Activated CD4-positive, alpha-beta memory T cell treated with anti-CD3 and anti-CD28 coated beads, Interleukin-2, amount 10 ng/mL, durations not matched to agents 7 days and 5 days (primary cell): ENCODE measurements at regions of chr11 and their contacts with region 1.

Region 1: GRCh38 chr11:4072668-4073285 is 21.8 kb upstream of the RRM1 start:
- DNase-seq: peak; percentile 51
- H3K4me3 Mint-ChIP-seq: no peak overlapping the region
- H3K27ac Mint-ChIP-seq: peak overlapping the region; percentile 5
- H3K4me1 Mint-ChIP-seq: peaks cover 33% of the 10 kb centered on the region
- H3K27me3 Mint-ChIP-seq: no peaks in the 10 kb centered on the region

Region 2: GRCh38 chr11:3824714-3825472 is 247.9 kb before region 1 on chr11:
- CTCF ChIA-PET with region 1: interaction called, 19 read pairs
- POLR2A ChIA-PET with region 1: interaction called, 6 read pairs
- DNase-seq: peak; percentile 82
- H3K4me3 Mint-ChIP-seq: no peak overlapping the region
- H3K27ac Mint-ChIP-seq: peak overlapping the region; percentile 56
- H3K4me1 Mint-ChIP-seq: peaks cover 30% of the 10 kb centered on the region
- H3K27me3 Mint-ChIP-seq: no peaks in the 10 kb centered on the region

Region 3: DNA sequence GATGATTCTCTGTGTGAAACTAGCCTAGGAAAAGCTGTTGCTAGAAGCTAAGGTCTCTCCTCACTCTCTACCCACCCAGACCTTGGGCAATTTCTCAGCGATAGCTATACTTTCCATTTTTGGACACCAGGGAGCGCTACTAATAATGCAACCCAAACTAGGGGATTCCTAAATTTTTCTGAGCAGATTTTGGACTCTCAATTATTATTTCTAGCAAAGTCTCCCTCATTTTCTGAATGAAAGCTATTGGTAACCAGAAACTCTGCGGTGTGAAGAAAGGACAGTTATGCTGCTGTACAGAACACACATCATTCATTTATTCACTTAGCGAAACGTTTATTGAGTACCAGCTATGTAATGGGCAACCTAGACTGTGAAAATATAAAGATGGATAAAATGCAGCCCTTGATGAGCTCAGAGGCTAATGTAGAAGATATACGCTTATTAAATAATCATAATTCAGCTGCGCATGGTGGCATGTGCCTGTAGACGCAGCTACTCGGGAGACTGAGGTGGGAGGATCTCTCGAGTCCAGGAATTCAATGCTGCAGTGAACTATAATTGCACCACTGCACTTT is 223.4 kb before region 1 on chr11:
- CTCF ChIA-PET with region 1: interaction called, 554 read pairs
- POLR2A ChIA-PET with region 1: interaction called, 108 read pairs
- DNase-seq: peak; percentile 48
- H3K4me3 Mint-ChIP-seq: no peak overlapping the region
- H3K27ac Mint-ChIP-seq: no peak overlapping the region
- H3K4me1 Mint-ChIP-seq: peaks cover 33% of the 10 kb centered on the region
- H3K27me3 Mint-ChIP-seq: peaks cover 3% of the 10 kb centered on the region

Region 4: DNA sequence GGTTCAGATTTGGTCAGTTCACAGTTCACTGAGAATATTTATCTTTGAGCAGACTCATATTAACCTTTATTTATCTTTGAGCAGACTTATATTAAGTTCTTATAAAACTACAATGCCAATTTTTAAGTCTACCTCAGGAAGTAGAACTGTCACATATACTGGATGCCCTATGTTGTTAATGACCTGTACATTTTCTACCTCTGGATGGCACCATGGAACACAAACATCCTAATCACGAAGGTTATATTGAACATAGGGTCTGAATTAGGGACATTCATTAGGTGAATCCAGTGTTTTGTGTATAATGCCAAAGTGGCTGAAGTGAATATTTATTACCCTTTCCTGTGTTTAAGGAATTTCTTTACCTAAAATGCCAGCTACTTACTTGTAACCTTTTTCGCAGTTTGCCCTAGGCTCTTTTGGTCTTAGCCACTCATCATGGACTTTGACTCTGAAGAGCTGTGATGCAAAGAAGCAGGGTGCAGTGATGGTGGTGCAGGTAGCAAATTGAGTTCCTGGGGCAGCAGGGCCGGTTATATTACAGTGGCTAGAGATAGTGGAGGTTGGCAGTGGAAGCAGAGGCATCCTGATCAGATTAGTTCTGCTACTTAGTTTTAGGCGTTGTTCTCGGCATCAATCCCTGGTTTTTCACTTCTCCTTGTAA is 145.5 kb before region 1 on chr11:
- CTCF ChIA-PET with region 1: interaction called, 15 read pairs
- POLR2A ChIA-PET with region 1: no interaction called
- DNase-seq: no peak
- H3K4me3 Mint-ChIP-seq: no peak overlapping the region
- H3K27ac Mint-ChIP-seq: no peak overlapping the region
- H3K4me1 Mint-ChIP-seq: peaks cover 9% of the 10 kb centered on the region
- H3K27me3 Mint-ChIP-seq: no peaks in the 10 kb centered on the region

Region 5: DNA sequence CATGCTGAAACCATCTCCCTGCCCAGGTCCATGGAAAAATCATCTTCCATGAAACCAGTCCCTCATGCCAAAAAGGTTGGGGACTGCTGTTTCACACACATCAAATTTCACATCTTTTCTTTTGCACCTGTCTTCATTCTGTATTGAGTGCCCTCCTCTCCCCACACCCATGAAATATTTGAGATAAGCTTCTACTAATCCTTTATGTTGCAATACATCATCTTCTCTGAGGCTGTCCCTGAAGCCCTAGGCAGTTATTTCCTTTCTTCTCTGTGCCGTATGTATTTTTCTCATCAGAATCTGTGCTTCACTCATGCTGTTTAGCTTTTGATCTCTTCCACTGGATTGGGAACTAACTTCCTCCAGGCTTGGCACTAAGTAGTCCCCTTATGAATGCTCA is 18.1 kb before region 1 on chr11:
- CTCF ChIA-PET with region 1: interaction called, 15 read pairs
- POLR2A ChIA-PET with region 1: interaction called, 3 read pairs
- DNase-seq: no peak
- H3K4me3 Mint-ChIP-seq: no peak overlapping the region
- H3K27ac Mint-ChIP-seq: no peak overlapping the region
- H3K4me1 Mint-ChIP-seq: peaks cover 16% of the 10 kb centered on the region
- H3K27me3 Mint-ChIP-seq: no peaks in the 10 kb centered on the region

Region 6: DNA sequence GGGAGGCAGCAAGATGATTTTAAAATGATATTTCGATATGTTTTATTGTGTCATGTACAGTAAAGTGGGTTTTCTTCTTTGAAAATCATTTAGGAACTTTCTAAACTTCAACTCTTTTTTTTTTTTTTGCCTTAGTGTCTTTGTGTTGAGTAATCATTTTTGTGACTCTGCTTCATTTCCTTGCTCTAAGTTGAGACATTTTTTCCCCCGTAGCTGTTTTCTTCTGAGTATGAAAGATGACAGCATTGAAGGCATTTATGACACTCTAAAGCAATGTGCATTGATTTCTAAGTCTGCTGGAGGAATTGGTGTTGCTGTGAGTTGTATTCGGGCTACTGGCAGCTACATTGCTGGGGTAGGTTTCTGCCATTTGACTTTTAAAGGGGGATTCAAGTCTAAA is 45.3 kb after region 1 on chr11:
- CTCF ChIA-PET with region 1: no interaction called
- POLR2A ChIA-PET with region 1: no interaction called
- DNase-seq: no peak
- H3K4me3 Mint-ChIP-seq: no peak overlapping the region
- H3K27ac Mint-ChIP-seq: peak overlapping the region; percentile 59
- H3K4me1 Mint-ChIP-seq: peaks cover 18% of the 10 kb centered on the region
- H3K27me3 Mint-ChIP-seq: no peaks in the 10 kb centered on the region